K562 (cell line): ENCODE measurements at regions of chr7 and their contacts with region 1.

Region 1: DNA sequence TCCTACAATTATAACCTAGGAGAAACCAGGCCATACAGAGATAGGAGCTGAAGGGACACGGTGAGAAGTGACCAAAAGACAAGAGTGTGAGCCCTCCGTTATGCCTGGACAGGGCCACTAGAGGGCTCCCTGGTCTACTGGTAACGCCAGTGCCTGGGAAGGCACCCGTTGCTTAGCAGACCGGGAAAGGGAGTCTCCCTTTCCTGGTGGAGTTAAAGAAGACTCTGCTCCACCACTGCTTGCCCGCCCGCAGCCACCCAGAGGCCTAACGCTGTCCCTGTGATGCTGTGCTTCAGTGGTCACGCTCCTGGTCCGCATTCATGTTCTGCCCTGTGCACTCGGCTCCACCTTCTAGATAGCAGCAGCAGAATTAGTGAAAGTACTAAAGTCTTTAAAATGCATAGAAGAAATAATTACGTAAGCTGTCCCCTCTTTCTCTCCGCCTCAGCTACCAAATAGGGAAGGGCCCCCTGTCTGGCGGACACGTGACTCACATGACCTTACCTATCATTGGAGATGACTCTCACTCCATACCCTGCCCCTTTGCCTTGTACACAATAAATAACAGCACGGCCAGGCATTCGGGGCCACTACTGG is 34.8 kb downstream of the GRID2IP start:
- DNase-seq: peak; percentile 56 to 86 (median 60)
- ATAC-seq: peak; percentile 84
- H3K4me3 ChIP-seq: no peak overlapping the region
- H3K27ac ChIP-seq: no peak overlapping the region
- H3K4me1 ChIP-seq: peaks cover 0 to 6% of the 10 kb centered on the region in 2 experiments; a peak in 2 of 5 replicates
- H3K27me3 ChIP-seq: peaks cover 4 to 48% of the 10 kb centered on the region in 2 experiments; a peak in 4 of 5 replicates
- CTCF ChIP-seq: peak; percentile 83 to 90 (median 87)
- EP300 ChIP-seq: no peak
- POLR2A ChIP-seq: no peak
- RAD21 ChIP-seq: peak; percentile 80 to 90

Region 2: DNA sequence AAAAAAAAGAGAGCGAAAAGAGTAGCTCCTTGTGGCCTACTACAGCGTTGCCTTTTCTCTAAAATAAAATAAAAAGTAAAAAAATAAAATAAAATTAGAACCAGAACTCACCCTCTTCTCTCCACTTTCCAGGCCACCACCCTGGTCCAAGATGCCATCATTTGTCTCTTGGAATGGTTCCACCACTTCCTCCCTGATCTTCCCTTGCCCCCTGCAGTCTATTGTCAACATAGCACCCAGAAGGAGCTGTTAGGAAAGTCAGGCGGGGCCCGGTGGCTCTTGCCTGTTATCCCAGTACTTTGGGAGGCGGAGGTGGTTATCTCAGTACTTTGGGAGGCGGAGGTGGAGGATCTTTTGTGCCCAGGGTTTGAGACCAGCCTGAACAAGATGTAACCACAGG is 42.4 kb after region 1 on chr7:
- CTCF ChIA-PET with region 1: interaction called, 4 read pairs
- POLR2A ChIA-PET with region 1: interaction called, 3 read pairs
- in situ Hi-C with region 1: no loop called
- intact Hi-C with region 1: loop called (anchors 2 kb)
- DNase-seq: peak; percentile 74 to 81 (median 78)
- ATAC-seq: peak; percentile 90
- H3K4me3 ChIP-seq: no peak overlapping the region
- H3K27ac ChIP-seq: no peak overlapping the region
- H3K4me1 ChIP-seq: 0 out of 5 replicates have a peak, but pooled peaks cover 0 to 5% of the 10 kb centered on the region in 2 experiments
- H3K27me3 ChIP-seq: peaks cover 5 to 26% of the 10 kb centered on the region in 2 experiments; a peak in 3 of 5 replicates
- CTCF ChIP-seq: peak; percentile 63 to 79 (median 79)
- EP300 ChIP-seq: no peak
- POLR2A ChIP-seq: no peak
- RAD21 ChIP-seq: peak; percentile 45 to 60

Region 3: DNA sequence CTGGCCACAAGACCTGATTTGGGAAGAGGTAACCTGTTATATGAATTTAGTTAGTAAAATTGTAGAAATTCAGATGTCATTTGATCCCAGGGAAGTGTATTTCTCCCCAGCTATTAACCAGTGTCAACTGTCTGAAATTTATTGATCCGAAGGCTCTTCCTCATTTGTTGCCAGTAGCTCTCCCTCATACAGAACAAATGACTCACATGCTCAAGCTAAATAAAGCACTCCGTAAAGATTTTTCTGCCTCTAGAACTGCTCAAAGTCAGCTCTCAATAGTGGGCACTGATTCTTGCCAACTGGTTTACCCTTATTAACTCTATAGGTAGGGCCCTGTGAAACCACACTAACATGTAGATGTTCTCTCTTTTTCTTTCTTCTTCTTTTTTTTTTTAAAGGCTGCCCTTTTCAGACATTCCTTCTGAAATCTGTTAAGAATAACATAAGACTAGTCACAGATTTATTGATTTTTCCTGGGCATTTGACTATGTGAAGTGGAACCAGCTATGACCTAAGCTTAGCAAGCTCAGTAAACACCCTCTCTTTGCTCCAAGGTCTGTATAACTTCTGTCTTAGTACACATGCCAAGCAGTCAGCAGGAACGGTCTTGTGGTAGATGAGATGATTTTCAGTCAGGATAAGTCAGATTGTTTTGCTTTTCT is 1180.1 kb after region 1 on chr7:
- CTCF ChIA-PET with region 1: no interaction called
- POLR2A ChIA-PET with region 1: no interaction called
- in situ Hi-C with region 1: no loop called
- intact Hi-C with region 1: no loop called
- DNase-seq: no peak
- ATAC-seq: no peak
- H3K4me3 ChIP-seq: no peak overlapping the region
- H3K27ac ChIP-seq: no peak overlapping the region
- H3K4me1 ChIP-seq: no peaks in the 10 kb centered on the region
- H3K27me3 ChIP-seq: no peaks in the 10 kb centered on the region
- CTCF ChIP-seq: no peak
- EP300 ChIP-seq: no peak
- POLR2A ChIP-seq: no peak
- RAD21 ChIP-seq: no peak